GM12878 (cell line): ENCODE measurements at regions of chr9 and their contacts with region 1.

Region 1: DNA sequence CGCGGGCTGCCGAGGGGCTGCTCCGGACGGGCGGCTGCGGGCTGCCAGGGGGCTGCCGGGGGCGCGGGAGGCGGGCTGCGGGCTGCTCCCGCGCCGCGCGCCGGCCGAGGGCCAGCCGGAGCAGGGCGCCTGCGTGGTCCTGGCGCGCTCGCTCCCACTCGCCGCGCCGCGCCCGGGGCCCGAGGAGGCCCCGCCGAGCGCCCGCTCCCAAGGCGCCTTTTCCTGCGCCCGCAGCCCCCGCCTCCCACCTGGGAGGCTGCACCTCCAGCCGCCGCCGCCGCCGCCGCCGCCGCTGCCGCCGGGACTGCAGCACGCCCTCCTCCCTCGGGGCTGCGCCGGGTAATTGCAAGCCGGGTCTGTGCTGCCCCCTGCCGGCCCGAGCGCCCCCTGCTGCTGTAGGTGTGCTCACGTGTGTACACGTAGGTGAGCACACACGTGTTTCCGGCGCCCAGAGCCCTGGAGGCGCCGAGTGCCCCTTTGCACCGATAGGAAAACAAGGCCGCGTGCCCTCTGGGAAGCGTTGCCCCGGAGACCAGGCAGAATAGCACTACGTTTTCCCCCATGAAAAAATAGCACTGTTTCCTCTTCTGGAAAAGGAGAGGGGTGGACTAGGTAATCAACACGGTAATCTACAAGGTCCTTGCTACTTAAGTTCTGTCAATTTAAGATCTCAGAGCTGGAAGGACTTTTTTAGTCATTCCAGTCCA is at the start of gene EPB41L4B:
- DNase-seq: peak; percentile 19
- ATAC-seq: peak; percentile 100
- H3K4me3 ChIP-seq: no peak within 1 kb of the TSS; the same call in 1 of the 2 replicates
- H3K27ac ChIP-seq: no peak within 1 kb of the TSS
- H3K4me1 ChIP-seq: no peaks in the 10 kb centered on the region
- H3K27me3 ChIP-seq: peaks cover 5 to 6% of the 10 kb centered on the region in 2 experiments
- CTCF ChIP-seq: peak; percentile 83 to 92 (median 90)
- EP300 ChIP-seq: no peak
- POLR2A ChIP-seq: no peak
- RAD21 ChIP-seq: peak; percentile 80
- polyA plus RNA-seq, gene EPB41L4B: 0.04 to 0.13 TPM

Region 2: GRCh38 chr9:109182940-109183798 is 137.7 kb before region 1 on chr9:
- CTCF ChIA-PET with region 1: no interaction called
- POLR2A ChIA-PET with region 1: no interaction called
- RAD21 ChIA-PET with region 1: no interaction called
- SMC1A ChIA-PET with region 1: no interaction called
- in situ Hi-C with region 1: no loop called
- intact Hi-C with region 1: loop called (anchors 5 kb)
- DNase-seq: no peak
- ATAC-seq: peak; percentile 84
- H3K4me3 ChIP-seq: no peak overlapping the region
- H3K27ac ChIP-seq: no peak overlapping the region
- H3K4me1 ChIP-seq: peaks cover 9% of the 10 kb centered on the region
- H3K27me3 ChIP-seq: peaks cover 2 to 3% of the 10 kb centered on the region in 2 experiments; a peak in 1 of 4 replicates
- CTCF ChIP-seq: peak; percentile 46 to 64 (median 54)
- EP300 ChIP-seq: no peak
- POLR2A ChIP-seq: no peak
- RAD21 ChIP-seq: peak; percentile 50

Region 3: GRCh38 chr9:109198736-109199379 is 122.0 kb before region 1 on chr9:
- CTCF ChIA-PET with region 1: no interaction called
- POLR2A ChIA-PET with region 1: no interaction called
- RAD21 ChIA-PET with region 1: no interaction called
- SMC1A ChIA-PET with region 1: no interaction called
- in situ Hi-C with region 1: no loop called
- intact Hi-C with region 1: no loop called
- DNase-seq: no peak
- ATAC-seq: peak; percentile 40; the same call in 2 of the 3 replicates
- H3K4me3 ChIP-seq: no peak overlapping the region
- H3K27ac ChIP-seq: no peak overlapping the region
- H3K4me1 ChIP-seq: no peaks in the 10 kb centered on the region
- H3K27me3 ChIP-seq: peaks cover 2 to 5% of the 10 kb centered on the region in 2 experiments; a peak in 3 of 4 replicates
- CTCF ChIP-seq: peak; percentile 16 to 29 (median 29); a peak in 3 of 6 replicates
- EP300 ChIP-seq: no peak
- POLR2A ChIP-seq: no peak
- RAD21 ChIP-seq: peak; percentile 35; the same call in 1 of the 2 replicates

Region 4: DNA sequence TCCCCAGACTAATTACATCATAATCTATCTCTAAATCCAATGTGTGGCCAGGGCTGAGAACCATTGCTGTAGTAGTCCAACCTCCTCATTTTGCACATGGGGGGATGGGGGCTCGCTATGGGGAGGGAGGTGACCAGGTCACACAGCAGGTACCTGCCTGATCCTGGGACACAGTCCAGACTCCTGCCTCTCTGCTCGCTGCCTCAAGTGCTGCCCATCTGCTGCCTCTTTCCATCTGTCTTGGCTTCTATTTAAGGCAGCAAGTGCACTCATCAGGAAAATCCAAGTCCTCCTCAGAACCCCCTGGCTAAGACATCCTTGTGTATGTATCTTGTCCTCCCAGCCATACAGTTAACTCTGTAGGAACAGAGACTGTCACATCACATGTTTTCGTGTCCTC is 96.1 kb before region 1 on chr9:
- CTCF ChIA-PET with region 1: no interaction called
- POLR2A ChIA-PET with region 1: no interaction called
- RAD21 ChIA-PET with region 1: no interaction called
- SMC1A ChIA-PET with region 1: no interaction called
- in situ Hi-C with region 1: no loop called
- intact Hi-C with region 1: no loop called
- DNase-seq: no peak
- ATAC-seq: no peak
- H3K4me3 ChIP-seq: no peak overlapping the region
- H3K27ac ChIP-seq: no peak overlapping the region
- H3K4me1 ChIP-seq: no peaks in the 10 kb centered on the region
- H3K27me3 ChIP-seq: peaks cover 0 to 3% of the 10 kb centered on the region in 2 experiments; a peak in 2 of 4 replicates
- CTCF ChIP-seq: no peak
- EP300 ChIP-seq: no peak
- POLR2A ChIP-seq: no peak
- RAD21 ChIP-seq: no peak

Region 5: GRCh38 chr9:109244157-109245132 is 76.5 kb before region 1 on chr9:
- CTCF ChIA-PET with region 1: interaction called, 4 read pairs
- POLR2A ChIA-PET with region 1: no interaction called
- RAD21 ChIA-PET with region 1: no interaction called
- SMC1A ChIA-PET with region 1: no interaction called
- in situ Hi-C with region 1: no loop called
- intact Hi-C with region 1: loop called (anchors 2 kb)
- DNase-seq: peak; percentile 25
- ATAC-seq: peak; percentile 98
- H3K4me3 ChIP-seq: no peak overlapping the region
- H3K27ac ChIP-seq: no peak overlapping the region
- H3K4me1 ChIP-seq: no peaks in the 10 kb centered on the region
- H3K27me3 ChIP-seq: peaks cover 0 to 2% of the 10 kb centered on the region in 2 experiments; a peak in 1 of 4 replicates
- CTCF ChIP-seq: peak; percentile 83 to 96 (median 95)
- EP300 ChIP-seq: no peak
- POLR2A ChIP-seq: no peak
- RAD21 ChIP-seq: peak; percentile 63

Region 6: DNA sequence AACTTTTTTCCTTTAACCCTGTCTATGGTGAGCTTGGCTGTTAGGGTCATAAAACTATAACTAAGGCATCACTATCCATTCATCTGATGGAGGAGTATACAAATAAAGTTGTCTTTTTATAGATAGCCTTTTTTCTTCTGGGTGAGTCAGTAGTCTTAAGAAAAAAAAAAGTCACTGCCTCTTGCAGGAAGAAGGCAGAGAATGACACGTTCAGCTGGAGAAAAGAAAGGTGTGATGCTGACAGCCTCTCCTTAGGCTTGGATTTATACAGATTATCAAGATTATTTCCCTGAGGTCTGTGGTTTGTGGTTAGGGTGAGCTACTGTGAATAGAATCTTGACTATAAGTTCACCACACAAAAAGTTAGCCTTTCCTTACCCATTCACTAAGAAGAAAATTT is 23.0 kb before region 1 on chr9:
- CTCF ChIA-PET with region 1: no interaction called
- POLR2A ChIA-PET with region 1: no interaction called
- RAD21 ChIA-PET with region 1: no interaction called
- SMC1A ChIA-PET with region 1: no interaction called
- in situ Hi-C with region 1: no loop called
- intact Hi-C with region 1: no loop called
- DNase-seq: no peak
- ATAC-seq: no peak
- H3K4me3 ChIP-seq: no peak overlapping the region
- H3K27ac ChIP-seq: no peak overlapping the region
- H3K4me1 ChIP-seq: no peaks in the 10 kb centered on the region
- H3K27me3 ChIP-seq: no peaks in the 10 kb centered on the region; a peak in 2 of 4 replicates
- CTCF ChIP-seq: no peak
- EP300 ChIP-seq: no peak
- POLR2A ChIP-seq: no peak
- RAD21 ChIP-seq: no peak

Region 7: GRCh38 chr9:109341565-109341964 is 20.7 kb after region 1 on chr9:
- CTCF ChIA-PET with region 1: no interaction called
- POLR2A ChIA-PET with region 1: no interaction called
- RAD21 ChIA-PET with region 1: no interaction called
- SMC1A ChIA-PET with region 1: no interaction called
- in situ Hi-C with region 1: no loop called
- intact Hi-C with region 1: no loop called
- DNase-seq: no peak
- ATAC-seq: no peak
- H3K4me3 ChIP-seq: no peak overlapping the region
- H3K27ac ChIP-seq: no peak overlapping the region
- H3K4me1 ChIP-seq: no peaks in the 10 kb centered on the region
- H3K27me3 ChIP-seq: no peaks in the 10 kb centered on the region; a peak in 1 of 4 replicates
- CTCF ChIP-seq: no peak
- EP300 ChIP-seq: no peak
- POLR2A ChIP-seq: no peak
- RAD21 ChIP-seq: no peak